ENCODE measurements at regions of chr9 and their contacts with region 1.

Region 1: GRCh38 chr9:103627731-103628130 is 466.4 kb upstream of the SMC2 start:
- DNase-seq: no peak
- ATAC-seq: no peak
- H3K4me3 ChIP-seq: no peak overlapping the region
- H3K4me3 Mint-ChIP-seq: no peak overlapping the region
- H3K27ac ChIP-seq: no peak overlapping the region
- H3K27ac Mint-ChIP-seq: no peak overlapping the region
- H3K4me1 ChIP-seq: no peaks in the 10 kb centered on the region
- H3K4me1 Mint-ChIP-seq: no peaks in the 10 kb centered on the region
- H3K27me3 ChIP-seq: no peaks in the 10 kb centered on the region
- H3K27me3 Mint-ChIP-seq: no peaks in the 10 kb centered on the region
- CTCF ChIP-seq: no peak

Region 2: DNA sequence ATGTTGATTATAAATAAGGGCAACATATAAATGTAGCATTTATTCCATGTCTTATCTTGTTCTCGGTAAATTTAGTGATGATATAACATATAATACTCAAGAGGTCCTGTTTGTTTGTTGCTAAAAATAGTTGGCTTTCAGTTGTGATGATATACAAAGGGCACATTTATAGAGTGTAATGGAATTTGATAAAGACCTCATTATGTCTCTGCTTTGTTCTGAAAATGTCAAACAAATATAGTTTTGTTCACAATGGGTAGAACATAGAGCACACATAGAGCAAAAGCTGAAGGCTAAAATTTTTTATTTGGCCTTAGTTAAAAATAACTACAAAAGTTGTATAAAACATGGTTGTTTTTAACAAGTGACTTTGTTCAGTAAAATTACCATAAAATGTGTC is 10.7 kb before region 1 on chr9:
- CTCF ChIA-PET with region 1: no interaction called
- POLR2A ChIA-PET with region 1: no interaction called
- intact Hi-C with region 1: loop called in 1 of 2 experiments (anchors 1 kb)
- DNase-seq: no peak
- ATAC-seq: no peak
- H3K4me3 ChIP-seq: no peak overlapping the region
- H3K4me3 Mint-ChIP-seq: no peak overlapping the region
- H3K27ac ChIP-seq: no peak overlapping the region
- H3K27ac Mint-ChIP-seq: no peak overlapping the region
- H3K4me1 ChIP-seq: no peaks in the 10 kb centered on the region
- H3K4me1 Mint-ChIP-seq: no peaks in the 10 kb centered on the region
- H3K27me3 ChIP-seq: no peaks in the 10 kb centered on the region
- H3K27me3 Mint-ChIP-seq: no peaks in the 10 kb centered on the region
- CTCF ChIP-seq: no peak

Region 3: DNA sequence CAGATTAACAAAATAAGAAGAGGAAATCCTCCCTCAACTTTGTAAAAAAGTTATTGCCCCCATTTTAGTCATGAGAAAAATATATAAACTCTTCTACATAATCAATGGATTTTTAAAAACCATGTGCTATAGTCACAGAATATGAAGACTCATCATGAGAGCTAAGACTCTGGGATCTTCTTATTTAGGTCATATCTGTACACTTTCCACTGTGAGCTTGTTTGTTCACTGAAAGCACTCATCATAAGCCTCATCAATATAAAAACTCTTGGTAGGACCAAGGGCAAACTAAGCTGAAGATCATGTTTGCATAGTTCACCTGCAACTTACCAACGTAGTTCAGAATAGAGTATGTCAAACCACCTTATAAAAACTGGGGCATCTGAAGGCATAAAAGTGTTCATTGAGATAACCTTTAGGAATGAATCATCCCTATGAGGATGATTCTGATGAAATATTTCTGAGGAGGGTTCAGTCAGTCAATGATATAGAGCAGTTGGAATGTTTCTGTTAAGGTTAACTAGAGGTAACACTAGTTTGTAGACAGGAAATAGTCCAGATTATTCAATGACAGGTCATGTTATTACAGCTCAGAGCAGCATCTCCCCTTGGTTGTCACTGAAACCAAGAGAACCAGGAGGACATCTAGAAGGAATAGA is 176.5 kb after region 1 on chr9:
- CTCF ChIA-PET with region 1: no interaction called
- POLR2A ChIA-PET with region 1: no interaction called
- intact Hi-C with region 1: no loop called
- DNase-seq: no peak
- ATAC-seq: no peak
- H3K4me3 ChIP-seq: no peak overlapping the region
- H3K4me3 Mint-ChIP-seq: no peak overlapping the region
- H3K27ac ChIP-seq: no peak overlapping the region
- H3K27ac Mint-ChIP-seq: no peak overlapping the region
- H3K4me1 ChIP-seq: no peaks in the 10 kb centered on the region
- H3K4me1 Mint-ChIP-seq: no peaks in the 10 kb centered on the region
- H3K27me3 ChIP-seq: no peaks in the 10 kb centered on the region
- H3K27me3 Mint-ChIP-seq: no peaks in the 10 kb centered on the region
- CTCF ChIP-seq: no peak

Region 4: GRCh38 chr9:103999375-104000062 is 371.8 kb after region 1 on chr9:
- CTCF ChIA-PET with region 1: no interaction called
- POLR2A ChIA-PET with region 1: no interaction called
- intact Hi-C with region 1: no loop called
- DNase-seq: peak in 1 of 14 experiments; percentile 6
- ATAC-seq: no peak
- H3K4me3 ChIP-seq: no peak overlapping the region
- H3K4me3 Mint-ChIP-seq: no peak overlapping the region
- H3K27ac ChIP-seq: no peak overlapping the region
- H3K27ac Mint-ChIP-seq: no peak overlapping the region
- H3K4me1 ChIP-seq: no peaks in the 10 kb centered on the region
- H3K4me1 Mint-ChIP-seq: no peaks in the 10 kb centered on the region
- H3K27me3 ChIP-seq: no peaks in the 10 kb centered on the region
- H3K27me3 Mint-ChIP-seq: no peaks in the 10 kb centered on the region
- CTCF ChIP-seq: no peak

Measured in CD4-positive, alpha-beta T cell (primary cell).